Psoas muscle (tissue), 8 donors: ENCODE measurements at regions of chr1 and their contacts with region 1.

Region 1: DNA sequence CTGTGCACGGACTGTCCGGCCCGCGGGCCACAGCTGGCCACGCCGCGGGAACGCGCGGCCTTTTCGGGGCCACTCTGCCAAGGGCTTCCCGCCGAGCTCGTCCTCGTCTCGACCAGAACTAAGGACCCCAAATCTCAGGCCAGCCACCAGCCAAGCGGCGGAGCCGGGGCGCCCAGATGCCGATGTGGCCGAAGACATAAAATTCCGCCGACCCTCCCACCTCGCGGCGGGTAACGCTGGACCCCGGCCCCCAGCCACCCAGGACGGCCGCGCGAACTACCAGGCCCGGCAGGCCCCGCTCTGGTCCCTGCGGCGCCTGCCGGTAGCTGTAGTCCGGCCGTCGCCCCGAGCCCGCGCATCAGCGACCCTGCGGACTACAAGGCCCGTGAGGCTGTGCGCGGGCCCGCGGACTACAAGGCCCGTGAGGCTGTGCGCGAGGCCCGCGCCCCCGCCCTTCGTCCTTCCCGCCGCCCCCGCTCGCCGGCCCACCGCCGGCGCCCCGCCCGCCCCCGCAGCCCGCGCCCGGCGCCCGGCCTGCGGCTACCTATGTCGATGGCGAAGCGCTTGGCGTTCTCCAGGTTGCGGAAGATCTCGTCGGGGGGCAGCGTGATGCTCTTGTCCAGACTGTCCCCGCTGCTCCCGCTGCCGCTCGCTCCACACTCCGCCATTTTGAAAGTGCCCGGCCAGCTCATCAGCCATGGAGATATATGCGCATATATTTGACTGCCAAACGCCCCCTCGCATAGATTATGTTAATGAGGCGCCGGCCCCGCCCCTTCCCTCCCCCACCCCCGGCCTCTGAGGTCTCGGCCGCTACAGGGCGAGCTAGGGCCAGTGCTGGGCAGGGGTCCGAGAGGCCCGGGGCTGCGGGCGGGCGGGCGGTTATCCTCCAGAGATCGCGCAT is at the start of gene PANK4:
- DNase-seq: peak; percentile 95 to 96
- ATAC-seq: peak; percentile 77 to 85 (median 80)
- H3K4me3 ChIP-seq: peak within 1 kb of the TSS; percentile 77
- H3K27ac ChIP-seq: peak within 1 kb of the TSS; percentile 76
- H3K4me1 ChIP-seq: peaks cover 64% of the 10 kb centered on the region
- H3K27me3 ChIP-seq: no peaks in the 10 kb centered on the region
- CTCF ChIP-seq: no peak
- total RNA-seq, gene PANK4: 29.0 to 45.1 (median 35.3) TPM

Region 2: GRCh38 chr1:2189459-2190425 is 336.4 kb before region 1 on chr1:
- intact Hi-C with region 1: loop called (anchors 5 kb)
- DNase-seq: peak; percentile 89 to 99
- ATAC-seq: peak; percentile 92 to 97 (median 96)
- H3K4me3 ChIP-seq: peak overlapping the region; percentile 72
- H3K27ac ChIP-seq: peak overlapping the region; percentile 93
- H3K4me1 ChIP-seq: peaks cover 37% of the 10 kb centered on the region
- H3K27me3 ChIP-seq: no peaks in the 10 kb centered on the region
- CTCF ChIP-seq: no peak

Region 3: GRCh38 chr1:2300851-2301606 is 225.1 kb before region 1 on chr1:
- intact Hi-C with region 1: no loop called
- DNase-seq: peak; percentile 85 to 89
- ATAC-seq: peak; percentile 29 to 58 (median 38)
- H3K4me3 ChIP-seq: peak overlapping the region; percentile 53
- H3K27ac ChIP-seq: peak overlapping the region; percentile 63
- H3K4me1 ChIP-seq: peaks cover 30% of the 10 kb centered on the region
- H3K27me3 ChIP-seq: no peaks in the 10 kb centered on the region
- CTCF ChIP-seq: no peak

Region 4: DNA sequence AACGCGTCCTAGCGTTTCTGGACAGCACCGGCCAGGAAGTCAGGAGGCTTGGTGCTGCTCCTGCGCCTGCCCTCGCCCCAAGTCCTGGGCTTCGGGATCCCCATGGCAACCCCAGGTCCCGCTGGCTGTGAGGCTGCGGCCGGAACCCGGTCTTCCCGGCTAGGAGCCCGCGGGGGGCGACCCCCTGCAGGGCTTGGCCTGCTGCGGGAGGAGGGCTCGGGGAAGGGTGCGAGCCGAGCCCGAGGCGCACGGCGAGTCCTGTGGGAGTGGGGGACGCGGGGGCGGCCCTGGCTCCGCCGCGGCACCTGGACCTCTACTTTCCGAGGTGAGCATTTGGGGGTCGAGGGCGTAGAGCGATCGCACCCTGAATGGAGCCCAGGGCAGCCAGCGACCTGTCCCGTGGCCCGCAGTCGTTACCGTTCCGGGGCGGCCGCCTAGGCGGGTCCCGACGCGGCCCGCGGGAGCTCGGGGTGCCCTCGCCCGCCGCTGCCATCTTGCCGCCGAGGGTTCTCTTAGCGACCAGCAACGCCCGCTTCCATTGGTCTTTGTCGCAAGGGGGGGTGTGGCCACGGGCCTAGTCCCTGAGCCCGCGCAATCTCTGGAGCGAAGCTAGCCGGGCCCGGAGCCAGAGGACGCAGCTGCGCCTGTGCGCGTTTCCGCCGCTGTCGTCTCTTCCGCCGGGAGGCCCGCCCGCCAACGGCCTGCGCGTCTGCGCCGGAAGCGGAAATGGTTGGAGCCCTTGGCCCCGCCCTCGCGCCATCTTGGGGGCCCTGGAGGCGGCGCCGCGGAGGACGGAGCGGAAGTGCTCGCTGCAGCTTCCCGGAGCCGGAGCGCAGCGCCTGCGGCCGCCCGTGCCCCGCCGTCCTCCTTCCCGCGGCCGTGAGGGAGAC is 134.9 kb before region 1 on chr1 and contains the starts of genes MORN1 and RER1:
- intact Hi-C with region 1: loop called in 1 of 2 experiments (anchors 5 kb)
- DNase-seq: peak; percentile 100
- ATAC-seq: peak; percentile 96 to 98 (median 98)
- H3K4me3 ChIP-seq: peak within 1 kb of the TSS; percentile 99
- H3K27ac ChIP-seq: peak within 1 kb of the TSS; percentile 83
- H3K4me1 ChIP-seq: peaks cover 31% of the 10 kb centered on the region
- H3K27me3 ChIP-seq: no peaks in the 10 kb centered on the region
- CTCF ChIP-seq: no peak
- total RNA-seq, gene MORN1: 3.6 to 6.3 (median 4.5) TPM
- total RNA-seq, gene RER1: 71.1 to 97.6 (median 86.7) TPM